Naive thymus-derived CD8-positive, alpha-beta T cell (primary cell): ENCODE measurements at regions of chr17 and their contacts with region 1.

Region 1: DNA sequence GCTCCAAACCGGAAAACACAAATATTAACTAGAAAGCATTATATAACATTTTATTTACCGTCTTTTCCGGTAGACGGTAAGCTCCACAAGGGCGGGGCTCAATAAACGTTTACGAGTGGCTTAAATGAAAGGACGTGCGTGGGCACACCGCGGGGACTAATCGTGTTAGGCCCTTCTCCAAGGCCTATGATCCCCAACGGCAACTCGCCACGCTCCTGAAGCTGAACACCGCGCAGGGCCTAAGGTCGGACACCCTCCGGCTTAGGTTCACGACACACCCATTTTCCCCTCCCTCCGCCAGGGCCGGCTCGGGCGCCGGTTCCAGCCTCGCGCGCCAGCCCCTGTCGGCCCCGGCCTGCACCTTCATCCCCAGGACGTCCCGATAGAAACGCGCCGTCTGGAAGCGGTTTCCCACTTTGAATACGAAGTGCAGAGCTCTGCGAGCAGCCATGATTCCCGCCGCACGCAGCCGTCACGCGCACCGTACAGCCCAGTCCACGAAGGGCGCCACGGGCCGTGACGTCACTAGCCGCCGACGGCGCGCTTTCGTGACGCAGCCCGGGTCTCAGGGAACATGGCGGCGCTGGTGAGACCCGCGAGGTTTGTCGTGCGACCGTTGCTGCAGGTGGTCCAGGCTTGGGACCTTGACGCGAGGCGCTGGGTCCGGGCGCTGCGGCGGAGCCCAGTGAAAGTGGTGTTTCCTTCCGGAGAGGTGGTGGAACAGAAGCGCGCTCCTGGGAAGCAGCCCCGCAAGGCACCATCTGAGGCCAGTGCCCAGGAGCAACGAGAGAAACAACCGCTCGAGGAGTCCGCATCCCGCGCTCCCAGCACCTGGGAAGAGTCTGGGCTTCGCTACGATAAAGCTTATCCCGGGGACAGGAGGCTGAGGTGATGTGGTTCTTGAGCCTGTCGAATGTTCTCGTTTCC is at the starts of genes GLOD4 and MRM3:
- DNase-seq: peak; percentile 92 to 98 (median 95)
- ATAC-seq: peak; percentile 95
- H3K4me3 Mint-ChIP-seq: peak within 1 kb of the TSS; percentile 95 to 99 (median 98)
- H3K27ac Mint-ChIP-seq: peak within 1 kb of the TSS; percentile 94 to 99 (median 98)
- H3K4me1 Mint-ChIP-seq: peaks cover 22 to 49% (median 45%) of the 10 kb centered on the region in 4 donors
- H3K27me3 Mint-ChIP-seq: peaks cover 0 to 1% (median 0%) of the 10 kb centered on the region in 5 donors
- polyA plus RNA-seq, gene GLOD4: 96.2 to 97.4 (median 97.2) TPM
- polyA plus RNA-seq, gene MRM3: 23.7 to 27.2 (median 23.9) TPM

Region 2: DNA sequence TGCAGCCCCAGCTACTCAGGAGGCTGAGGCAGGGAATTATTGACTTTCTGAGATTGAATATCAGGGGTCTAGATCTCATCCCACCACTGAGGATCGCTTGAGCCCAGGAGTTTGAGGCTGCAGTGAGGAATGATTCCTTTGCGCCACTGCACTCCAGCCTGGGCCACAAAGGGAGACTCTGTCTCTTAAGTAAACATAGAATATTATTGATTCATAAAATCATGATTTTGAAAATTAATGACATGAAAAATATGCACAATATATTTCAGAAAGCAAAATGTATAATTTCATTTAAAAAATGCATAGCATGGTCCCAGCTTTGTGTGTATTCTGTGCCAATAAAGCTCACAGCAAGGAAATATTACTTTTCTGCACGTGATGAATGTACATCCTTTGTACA is 65.8 kb before region 1 on chr17:
- POLR2A ChIA-PET with region 1: interaction called, 11 read pairs
- DNase-seq: no peak
- ATAC-seq: no peak
- H3K4me3 Mint-ChIP-seq: peak overlapping the region in 9 of 10 donors; percentile 26 to 100 (median 56)
- H3K27ac Mint-ChIP-seq: peak overlapping the region in 2 of 10 donors; percentile 11 to 34
- H3K4me1 Mint-ChIP-seq: peaks cover 9 to 36% (median 23%) of the 10 kb centered on the region in 4 donors
- H3K27me3 Mint-ChIP-seq: no peaks in the 10 kb centered on the region

Region 3: DNA sequence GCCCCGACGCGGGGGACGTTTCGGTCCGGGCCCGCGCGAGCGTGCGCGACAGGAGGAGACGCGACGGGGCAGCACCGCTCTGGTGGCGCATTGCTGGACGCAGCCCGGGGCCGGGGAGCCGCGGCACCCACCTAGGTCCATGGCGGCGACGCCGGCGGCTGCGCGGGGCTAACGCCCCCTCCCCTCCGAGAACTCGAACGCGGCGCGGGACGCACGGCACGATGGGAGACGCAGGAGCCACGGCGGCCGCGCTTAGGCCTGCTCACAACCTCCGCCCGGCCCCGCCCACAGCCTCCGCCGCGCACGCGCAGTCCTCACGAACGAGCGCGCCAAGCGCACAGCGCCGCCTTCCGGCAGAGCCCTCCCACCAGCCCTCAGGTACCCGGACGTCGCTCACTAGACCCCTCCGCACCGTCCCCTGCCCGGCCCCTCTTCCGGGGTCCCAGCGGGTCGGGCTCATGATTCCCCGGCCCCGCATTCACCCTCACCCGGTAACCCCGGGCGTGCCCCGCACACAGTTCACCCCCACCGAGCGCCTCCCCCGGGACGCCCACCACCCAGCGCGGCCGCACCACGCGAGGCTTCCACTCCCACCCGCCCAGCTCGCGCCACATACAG is 30.0 kb before region 1 on chr17 and contains the start of gene GEMIN4:
- POLR2A ChIA-PET with region 1: interaction called, 15 read pairs
- DNase-seq: peak; percentile 92 to 100 (median 98)
- ATAC-seq: peak; percentile 83 to 84
- H3K4me3 Mint-ChIP-seq: peak within 1 kb of the TSS; percentile 92 to 98 (median 96)
- H3K27ac Mint-ChIP-seq: peak within 1 kb of the TSS; percentile 93 to 98 (median 97)
- H3K4me1 Mint-ChIP-seq: peaks cover 33 to 45% (median 37%) of the 10 kb centered on the region in 4 donors
- H3K27me3 Mint-ChIP-seq: no peaks in the 10 kb centered on the region
- polyA plus RNA-seq, gene GEMIN4: 16.6 to 35.1 (median 21.2) TPM

Region 4: GRCh38 chr17:979538-980405 is 197.7 kb after region 1 on chr17 and contains the start of gene NXN:
- POLR2A ChIA-PET with region 1: interaction called, 12 read pairs
- DNase-seq: peak; percentile 74 to 97 (median 88)
- ATAC-seq: peak; percentile 76 to 80
- H3K4me3 Mint-ChIP-seq: peak within 1 kb of the TSS; percentile 71 to 87 (median 84)
- H3K27ac Mint-ChIP-seq: peak within 1 kb of the TSS in 7 of 10 donors; percentile 11 to 90 (median 75)
- H3K4me1 Mint-ChIP-seq: peaks cover 9 to 21% (median 17%) of the 10 kb centered on the region in 4 donors
- H3K27me3 Mint-ChIP-seq: peaks cover 15 to 35% (median 33%) of the 10 kb centered on the region in 5 donors
- polyA plus RNA-seq, gene NXN: 0.06 to 0.85 (median 0.07) TPM

Region 5: DNA sequence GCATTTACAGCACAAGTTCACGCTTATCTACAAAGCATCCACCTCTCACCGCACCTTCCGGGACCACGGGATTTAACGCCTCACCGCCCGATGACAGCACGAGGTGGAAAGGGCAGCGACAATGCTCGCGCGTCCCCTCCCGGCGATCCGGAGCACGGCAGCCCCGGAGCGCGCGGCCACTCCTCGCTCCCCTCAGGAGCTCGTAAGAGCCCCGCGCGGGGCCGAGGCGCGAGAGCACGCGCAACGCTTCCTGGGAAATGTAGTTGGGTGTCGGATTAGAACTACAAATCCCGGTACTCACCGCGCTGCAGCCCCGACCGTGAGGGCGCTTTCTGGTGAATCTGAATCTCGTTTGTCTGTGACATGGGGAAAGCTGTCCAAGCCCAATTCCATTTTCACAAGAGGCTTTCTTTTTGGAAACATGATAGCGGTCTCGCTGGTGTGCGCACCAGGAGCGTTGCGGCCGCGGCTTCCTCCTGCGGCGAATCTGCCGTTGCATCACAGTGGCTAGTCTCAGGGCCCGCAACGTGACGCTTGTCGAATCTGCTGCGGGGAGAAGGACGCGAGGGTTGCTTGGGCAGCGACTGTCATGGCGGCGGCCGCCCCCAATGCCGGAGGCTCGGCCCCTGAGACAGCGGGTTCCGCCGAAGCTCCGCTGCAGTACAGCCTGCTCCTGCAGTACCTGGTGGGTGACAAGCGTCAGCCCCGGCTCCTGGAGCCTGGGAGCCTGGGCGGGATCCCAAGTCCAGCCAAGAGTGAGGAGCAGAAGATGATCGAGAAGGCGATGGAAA is 214.7 kb after region 1 on chr17 and contains the start of gene TIMM22:
- POLR2A ChIA-PET with region 1: interaction called, 12 read pairs
- DNase-seq: peak; percentile 84 to 99 (median 92)
- ATAC-seq: peak; percentile 94
- H3K4me3 Mint-ChIP-seq: peak within 1 kb of the TSS; percentile 94 to 99 (median 98)
- H3K27ac Mint-ChIP-seq: peak within 1 kb of the TSS; percentile 96 to 99 (median 98)
- H3K4me1 Mint-ChIP-seq: peaks cover 16 to 27% (median 24%) of the 10 kb centered on the region in 4 donors
- H3K27me3 Mint-ChIP-seq: no peaks in the 10 kb centered on the region
- polyA plus RNA-seq, gene TIMM22: 20.8 to 25.2 (median 23.5) TPM